ENCODE measurements at regions of chr1 and their contacts with region 1.

Region 1: DNA sequence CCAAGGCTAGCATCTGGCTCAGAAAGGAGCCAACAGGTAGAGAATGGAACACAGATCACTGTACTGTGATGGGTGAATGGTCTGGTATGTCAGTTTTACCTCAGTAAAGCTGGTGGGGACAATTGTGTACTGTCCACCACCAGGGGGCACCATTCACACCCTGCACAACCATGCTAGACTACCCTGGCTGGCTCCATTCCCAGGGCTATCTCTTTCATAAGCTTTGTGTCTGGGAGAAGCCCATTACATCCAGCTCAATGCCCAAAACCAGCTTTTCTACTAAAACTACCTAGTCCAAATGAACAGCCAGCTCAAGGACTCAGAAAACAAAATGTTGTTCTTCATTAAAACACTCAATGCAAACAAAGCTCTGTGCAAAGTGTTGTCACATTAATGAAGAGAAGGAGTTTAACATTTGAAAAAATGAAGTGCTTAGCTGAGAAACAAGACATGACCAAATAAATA is 62.0 kb upstream of the RASAL2 start:
- DNase-seq: peak; percentile 90
- H3K4me3 ChIP-seq: no peak overlapping the region
- H3K27ac ChIP-seq: no peak overlapping the region
- H3K4me1 ChIP-seq: peaks cover 0 to 10% (median 4%) of the 10 kb centered on the region in 4 donors
- H3K27me3 ChIP-seq: no peaks in the 10 kb centered on the region
- CTCF ChIP-seq: peak; percentile 79 to 86 (median 82)
- EP300 ChIP-seq: no peak
- POLR2A ChIP-seq: no peak

Region 2: GRCh38 chr1:178093205-178093957 is 61.5 kb after region 1 on chr1:
- in situ Hi-C with region 1: no loop called
- intact Hi-C with region 1: loop called (anchors 5 kb)
- DNase-seq: peak; percentile 91
- H3K4me3 ChIP-seq: peak overlapping the region; percentile 80 to 95 (median 88)
- H3K27ac ChIP-seq: peak overlapping the region; percentile 91 to 96 (median 94)
- H3K4me1 ChIP-seq: peaks cover 10 to 38% (median 25%) of the 10 kb centered on the region in 4 donors
- H3K27me3 ChIP-seq: no peaks in the 10 kb centered on the region
- CTCF ChIP-seq: no peak
- EP300 ChIP-seq: no peak
- POLR2A ChIP-seq: no peak

Region 3: DNA sequence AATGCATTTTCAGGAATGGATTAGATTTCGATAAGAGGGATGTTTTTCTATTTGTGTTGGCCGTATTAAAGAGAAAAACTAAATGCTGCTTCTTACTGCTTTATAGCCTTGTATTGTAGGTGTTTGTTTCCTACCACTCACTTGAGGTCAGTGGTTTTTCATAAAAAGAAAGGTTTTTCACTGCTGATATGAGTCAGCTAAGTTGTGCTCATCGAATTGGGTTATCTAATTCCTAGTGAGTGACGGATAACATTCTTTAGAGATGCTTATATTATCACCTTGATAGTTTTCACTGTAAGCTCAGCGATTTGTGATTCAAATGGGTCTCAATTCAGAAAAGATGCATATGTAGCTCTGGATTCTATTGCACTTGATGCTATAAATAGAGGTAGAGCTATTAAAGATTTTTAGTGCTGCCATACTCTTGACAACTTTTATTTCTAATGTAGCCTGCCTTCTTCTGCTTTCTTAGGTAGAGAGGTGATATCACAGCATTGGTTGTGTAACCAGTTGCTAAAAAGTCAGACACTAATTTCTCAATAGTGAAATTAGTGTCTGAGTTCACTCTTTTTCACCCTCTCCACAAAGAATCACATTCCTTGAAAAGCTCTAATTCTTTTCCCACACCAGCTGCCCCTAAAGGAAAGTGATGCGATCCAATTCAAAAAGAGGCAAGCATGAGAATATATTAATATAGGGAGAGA is 242.0 kb after region 1 on chr1:
- in situ Hi-C with region 1: loop called in 3 of 4 experiments (anchors 10 to 25 kb)
- intact Hi-C with region 1: no loop called
- DNase-seq: no peak
- H3K4me3 ChIP-seq: no peak overlapping the region
- H3K27ac ChIP-seq: no peak overlapping the region
- H3K4me1 ChIP-seq: peaks cover 0 to 11% (median 2%) of the 10 kb centered on the region in 4 donors
- H3K27me3 ChIP-seq: no peaks in the 10 kb centered on the region
- CTCF ChIP-seq: no peak
- EP300 ChIP-seq: no peak
- POLR2A ChIP-seq: no peak

Region 4: GRCh38 chr1:178282949-178283367 is 251.1 kb after region 1 on chr1:
- in situ Hi-C with region 1: loop called in 3 of 4 experiments (anchors 10 to 25 kb)
- intact Hi-C with region 1: loop called (anchors 10 kb)
- DNase-seq: no peak
- H3K4me3 ChIP-seq: no peak overlapping the region
- H3K27ac ChIP-seq: no peak overlapping the region
- H3K4me1 ChIP-seq: peaks cover 0 to 21% (median 2%) of the 10 kb centered on the region in 4 donors
- H3K27me3 ChIP-seq: no peaks in the 10 kb centered on the region
- CTCF ChIP-seq: peak; percentile 15 to 40 (median 29)
- EP300 ChIP-seq: no peak
- POLR2A ChIP-seq: no peak

Measured in transverse colon (tissue), 4 donors.